Lower lobe of right lung (tissue), 2 donors: ENCODE measurements at regions of chr13 and their contacts with region 1.

Region 1: GRCh38 chr13:40666045-40666904 is at the start of gene FOXO1:
- DNase-seq: peak; percentile 92
- ATAC-seq: peak; percentile 90 to 93
- H3K4me3 ChIP-seq: peak within 1 kb of the TSS; percentile 98
- H3K27ac ChIP-seq: peak within 1 kb of the TSS; percentile 99
- H3K4me1 ChIP-seq: peaks cover 39% of the 10 kb centered on the region
- H3K27me3 ChIP-seq: no peaks in the 10 kb centered on the region
- CTCF ChIP-seq: no peak
- total RNA-seq, gene FOXO1: 19.9 TPM

Region 2: DNA sequence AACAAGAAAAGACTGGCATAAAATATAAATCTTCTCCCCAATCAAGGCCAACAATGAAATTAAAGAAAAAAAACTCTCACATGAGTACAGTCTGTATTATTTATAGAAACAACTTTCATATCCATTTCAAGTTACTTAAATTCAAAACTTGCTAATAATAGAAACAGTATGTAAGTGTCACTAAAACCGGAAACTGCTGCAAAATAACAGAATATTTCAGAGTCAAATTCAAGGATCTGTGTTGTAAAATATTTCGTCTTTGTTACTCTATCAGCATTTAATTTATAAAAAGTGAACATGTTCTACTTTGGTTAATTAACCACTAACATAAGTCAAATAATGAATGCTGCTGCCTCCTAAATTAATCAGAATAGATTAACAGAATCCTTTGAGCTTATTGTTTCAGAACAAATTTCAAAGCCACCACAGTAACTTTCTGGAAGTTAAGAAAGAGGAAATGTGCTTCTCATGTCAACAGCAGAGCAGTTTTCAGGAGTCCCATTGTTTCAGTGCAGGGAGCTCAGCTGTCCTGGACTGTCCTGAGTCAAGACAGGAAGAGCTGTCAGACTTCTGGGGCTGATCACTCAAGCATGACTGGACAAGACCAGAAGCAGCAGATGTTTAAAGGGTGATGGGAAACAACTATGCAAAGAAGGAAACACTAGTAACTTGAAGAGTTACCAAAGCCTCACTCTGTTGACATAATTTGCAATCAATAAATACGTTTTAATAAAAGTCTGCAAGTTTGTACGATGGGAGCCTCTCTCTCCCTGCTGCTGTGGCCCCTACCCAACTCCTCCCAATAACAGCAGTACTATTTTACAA is 76.8 kb before region 1 on chr13:
- intact Hi-C with region 1: loop called (anchors 10 kb)
- DNase-seq: no peak
- ATAC-seq: peak; percentile 75 to 91
- H3K4me3 ChIP-seq: no peak overlapping the region
- H3K27ac ChIP-seq: peak overlapping the region; percentile 16
- H3K4me1 ChIP-seq: peaks cover 62% of the 10 kb centered on the region
- H3K27me3 ChIP-seq: no peaks in the 10 kb centered on the region
- CTCF ChIP-seq: no peak

Region 3: GRCh38 chr13:41034881-41035280 is 368.6 kb after region 1 on chr13:
- intact Hi-C with region 1: no loop called
- DNase-seq: no peak
- ATAC-seq: peak in 1 of 2 donors; percentile 55
- H3K4me3 ChIP-seq: no peak overlapping the region
- H3K27ac ChIP-seq: no peak overlapping the region
- H3K4me1 ChIP-seq: peaks cover 21% of the 10 kb centered on the region
- H3K27me3 ChIP-seq: no peaks in the 10 kb centered on the region
- CTCF ChIP-seq: no peak